ENCODE measurements at regions of chr15 and their contacts with region 1.

Region 1: GRCh38 chr15:82540055-82540983 is at the start of gene RPS17:
- DNase-seq: peak; percentile 97
- ATAC-seq: peak; percentile 95
- H3K4me3 ChIP-seq: peak within 1 kb of the TSS; percentile 66 to 93 (median 84)
- H3K4me3 Mint-ChIP-seq: peak within 1 kb of the TSS; percentile 99
- H3K27ac ChIP-seq: peak within 1 kb of the TSS; percentile 72 to 85
- H3K27ac Mint-ChIP-seq: peak within 1 kb of the TSS; percentile 98
- H3K4me1 ChIP-seq: peaks cover 10 to 23% of the 10 kb centered on the region in 2 donors
- H3K4me1 Mint-ChIP-seq: peaks cover 22% of the 10 kb centered on the region
- H3K27me3 ChIP-seq: peaks cover 0 to 8% (median 0%) of the 10 kb centered on the region in 4 experiments
- H3K27me3 Mint-ChIP-seq: peaks cover 4% of the 10 kb centered on the region
- CTCF ChIP-seq: peak; percentile 96
- total RNA-seq, gene RPS17: 2,214 and 2,297 TPM in 2 replicates

Region 2: DNA sequence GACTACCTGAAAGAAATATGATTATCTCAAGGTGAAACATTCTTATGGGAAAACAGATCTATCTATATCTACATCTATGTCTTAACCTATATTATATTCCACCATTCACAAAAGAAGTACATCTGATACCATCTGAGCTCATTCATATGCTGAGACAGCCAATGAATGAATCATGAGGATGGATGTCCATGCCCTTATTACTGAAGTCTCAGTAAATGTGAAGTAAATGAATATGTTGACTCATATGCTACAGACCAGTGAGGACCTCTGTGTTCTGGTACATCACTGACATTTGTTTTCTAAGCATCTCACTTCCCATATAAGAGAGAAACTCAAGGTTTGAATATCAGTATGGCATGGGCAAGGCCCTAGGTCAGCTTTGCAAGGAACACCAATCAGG is 855.1 kb before region 1 on chr15:
- CTCF ChIA-PET with region 1: no interaction called
- POLR2A ChIA-PET with region 1: no interaction called
- intact Hi-C with region 1: no loop called
- DNase-seq: no peak
- ATAC-seq: no peak
- H3K4me3 ChIP-seq: no peak overlapping the region
- H3K4me3 Mint-ChIP-seq: no peak overlapping the region
- H3K27ac ChIP-seq: no peak overlapping the region
- H3K27ac Mint-ChIP-seq: no peak overlapping the region
- H3K4me1 ChIP-seq: no peaks in the 10 kb centered on the region
- H3K4me1 Mint-ChIP-seq: no peaks in the 10 kb centered on the region
- H3K27me3 ChIP-seq: no peaks in the 10 kb centered on the region
- H3K27me3 Mint-ChIP-seq: no peaks in the 10 kb centered on the region
- CTCF ChIP-seq: no peak

Region 3: DNA sequence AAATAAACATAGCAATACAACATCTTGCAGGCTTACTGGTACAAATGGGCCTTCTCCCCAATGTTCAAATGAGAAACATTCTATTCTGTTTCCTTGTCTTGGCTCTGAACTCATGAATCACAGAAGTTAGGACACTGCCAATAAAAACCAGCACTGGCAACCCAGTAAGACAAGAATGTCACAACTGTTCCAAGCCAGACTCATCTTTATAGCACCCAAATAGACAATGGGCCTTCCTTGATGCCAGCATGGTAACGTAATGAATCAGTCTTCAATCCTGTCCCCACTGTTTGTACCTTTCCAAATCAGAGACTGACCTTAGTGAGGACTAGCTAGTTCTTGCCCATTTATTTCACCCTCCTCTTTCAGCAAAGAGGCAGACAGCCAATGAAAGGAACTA is 14.0 kb after region 1 on chr15:
- CTCF ChIA-PET with region 1: no interaction called
- POLR2A ChIA-PET with region 1: no interaction called
- intact Hi-C with region 1: no loop called
- DNase-seq: no peak
- ATAC-seq: no peak
- H3K4me3 ChIP-seq: no peak overlapping the region
- H3K4me3 Mint-ChIP-seq: no peak overlapping the region
- H3K27ac ChIP-seq: no peak overlapping the region
- H3K27ac Mint-ChIP-seq: no peak overlapping the region
- H3K4me1 ChIP-seq: no peaks in the 10 kb centered on the region
- H3K4me1 Mint-ChIP-seq: peaks cover 4% of the 10 kb centered on the region
- H3K27me3 ChIP-seq: peaks cover 0 to 10% (median 2%) of the 10 kb centered on the region in 4 experiments
- H3K27me3 Mint-ChIP-seq: peaks cover 14% of the 10 kb centered on the region
- CTCF ChIP-seq: no peak

Region 4: DNA sequence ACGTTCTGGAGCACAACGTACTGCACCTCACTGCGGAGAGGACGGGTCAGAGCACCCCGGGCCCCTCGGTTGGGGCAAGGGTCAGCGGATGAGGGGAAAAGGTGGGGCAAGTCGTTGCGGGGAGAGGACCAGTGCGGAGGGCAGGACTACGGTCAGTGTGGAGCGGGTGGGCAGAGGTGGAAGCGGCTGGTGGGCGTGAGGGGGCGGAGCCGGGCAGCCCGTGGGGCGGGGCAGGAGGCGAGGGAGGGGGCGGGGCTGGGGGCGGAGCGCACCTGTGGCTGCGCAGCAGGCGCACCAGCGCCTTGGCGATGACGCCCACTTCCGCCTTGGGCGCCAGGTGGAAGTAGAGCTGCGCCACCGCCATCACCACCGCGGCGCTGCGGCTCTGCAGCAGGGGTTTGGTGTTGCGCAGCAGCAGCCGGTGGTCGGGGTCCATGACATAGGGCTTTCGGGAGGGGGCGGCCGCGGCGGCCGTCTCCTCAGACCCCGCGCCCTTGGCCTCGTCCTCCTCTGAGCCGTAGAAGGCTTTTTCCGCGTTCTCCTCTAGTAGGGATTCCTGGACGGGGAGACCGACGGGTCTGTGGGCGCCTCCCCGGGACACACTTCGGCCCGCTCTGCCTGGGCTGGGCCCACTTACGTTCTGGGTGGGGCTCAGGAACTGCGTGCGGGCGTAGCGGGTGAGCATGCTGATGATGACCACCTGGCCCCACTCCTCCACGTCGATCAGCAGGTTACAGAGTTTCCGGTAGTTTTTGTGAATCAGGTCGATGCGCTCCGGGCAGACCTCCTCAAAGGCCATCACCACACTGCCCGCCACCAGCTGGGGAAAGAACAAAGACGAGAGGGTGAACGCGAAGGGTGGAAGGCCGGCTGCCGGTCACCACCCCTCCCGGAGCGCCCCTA is 140.1 kb after region 1 on chr15:
- CTCF ChIA-PET with region 1: interaction called, 3 read pairs
- POLR2A ChIA-PET with region 1: no interaction called
- intact Hi-C with region 1: loop called (anchors 1 kb)
- DNase-seq: peak; percentile 85
- ATAC-seq: peak; percentile 91
- H3K4me3 ChIP-seq: peak overlapping the region in 4 of 5 experiments; percentile 61 to 84 (median 72)
- H3K4me3 Mint-ChIP-seq: peak overlapping the region; percentile 92
- H3K27ac ChIP-seq: peak overlapping the region; percentile 46 to 65
- H3K27ac Mint-ChIP-seq: peak overlapping the region; percentile 87
- H3K4me1 ChIP-seq: peaks cover 14 to 15% of the 10 kb centered on the region in 2 donors
- H3K4me1 Mint-ChIP-seq: peaks cover 12% of the 10 kb centered on the region
- H3K27me3 ChIP-seq: peaks cover 0 to 21% (median 6%) of the 10 kb centered on the region in 4 experiments
- H3K27me3 Mint-ChIP-seq: peaks cover 6% of the 10 kb centered on the region
- CTCF ChIP-seq: peak; percentile 21

Region 5: DNA sequence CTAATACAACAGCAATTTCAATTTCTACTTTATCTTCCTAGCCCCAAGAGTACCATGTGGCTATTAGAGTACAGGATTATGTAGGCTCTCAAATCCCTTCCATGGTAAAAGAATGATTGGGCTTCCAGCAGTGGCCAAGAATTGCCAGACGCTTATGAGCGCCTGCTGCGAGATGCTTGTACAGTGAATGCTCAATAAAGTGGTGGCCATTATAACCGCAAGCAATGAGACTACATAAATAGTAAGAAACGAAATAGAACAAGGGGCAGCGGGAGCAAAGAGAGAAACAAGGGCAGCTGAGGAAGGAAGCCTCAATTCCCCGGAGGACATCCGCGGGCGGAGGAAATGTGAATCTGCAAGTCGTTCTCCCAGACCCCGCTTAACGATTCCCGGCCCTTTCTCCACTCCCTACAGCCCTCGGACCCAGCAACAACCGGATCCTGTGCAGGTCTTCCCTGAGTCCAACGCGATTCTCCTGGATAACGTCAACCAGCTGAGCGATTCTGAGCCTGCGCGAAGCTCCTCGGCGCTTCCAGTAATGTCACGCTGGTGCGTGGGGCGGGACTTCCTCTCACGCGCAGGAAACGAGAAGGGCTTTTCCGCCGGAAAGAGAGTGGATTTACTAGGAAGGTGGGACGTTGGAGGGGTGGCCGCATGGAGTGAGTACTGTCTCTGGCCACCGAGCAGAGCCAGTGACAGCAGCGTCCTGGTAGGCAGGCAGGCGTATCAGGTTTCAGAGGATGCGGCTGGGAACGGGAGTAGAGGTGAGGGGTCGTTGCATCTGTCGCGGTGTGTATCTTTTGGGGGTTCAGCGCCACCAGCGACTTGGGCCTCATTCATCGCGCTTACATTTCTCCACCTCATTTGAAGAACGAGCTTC is 209.9 kb after region 1 on chr15:
- CTCF ChIA-PET with region 1: no interaction called
- POLR2A ChIA-PET with region 1: interaction called, 5 read pairs
- intact Hi-C with region 1: loop called (anchors 1 kb)
- DNase-seq: peak; percentile 86
- ATAC-seq: peak; percentile 95
- H3K4me3 ChIP-seq: peak overlapping the region; percentile 75 to 97 (median 79)
- H3K4me3 Mint-ChIP-seq: peak overlapping the region; percentile 98
- H3K27ac ChIP-seq: peak overlapping the region; percentile 72 to 82
- H3K27ac Mint-ChIP-seq: peak overlapping the region; percentile 90
- H3K4me1 ChIP-seq: peaks cover 16 to 20% of the 10 kb centered on the region in 2 donors
- H3K4me1 Mint-ChIP-seq: peaks cover 41% of the 10 kb centered on the region
- H3K27me3 ChIP-seq: no peaks in the 10 kb centered on the region
- H3K27me3 Mint-ChIP-seq: no peaks in the 10 kb centered on the region
- CTCF ChIP-seq: no peak

Region 6: GRCh38 chr15:82985688-82986441 is 445.5 kb after region 1 on chr15 and contains the start of gene RAMAC:
- CTCF ChIA-PET with region 1: interaction called, 11 read pairs
- POLR2A ChIA-PET with region 1: interaction called, 13 read pairs
- intact Hi-C with region 1: loop called (anchors 1 kb)
- DNase-seq: peak; percentile 97
- ATAC-seq: peak; percentile 94
- H3K4me3 ChIP-seq: peak within 1 kb of the TSS; percentile 77 to 92 (median 82)
- H3K4me3 Mint-ChIP-seq: peak within 1 kb of the TSS; percentile 100
- H3K27ac ChIP-seq: peak within 1 kb of the TSS; percentile 65 to 83
- H3K27ac Mint-ChIP-seq: peak within 1 kb of the TSS; percentile 97
- H3K4me1 ChIP-seq: peaks cover 12 to 17% of the 10 kb centered on the region in 2 donors
- H3K4me1 Mint-ChIP-seq: peaks cover 24% of the 10 kb centered on the region
- H3K27me3 ChIP-seq: no peaks in the 10 kb centered on the region
- H3K27me3 Mint-ChIP-seq: no peaks in the 10 kb centered on the region
- CTCF ChIP-seq: no peak
- total RNA-seq, gene RAMAC: 20.2 and 20.8 TPM in 2 replicates

Region 7: GRCh38 chr15:83011271-83012075 is 471.2 kb after region 1 on chr15 and contains the start of gene C15orf40:
- CTCF ChIA-PET with region 1: interaction called, 5 read pairs
- POLR2A ChIA-PET with region 1: interaction called, 9 read pairs
- intact Hi-C with region 1: loop called (anchors 1 kb)
- DNase-seq: peak; percentile 94
- ATAC-seq: peak; percentile 91
- H3K4me3 ChIP-seq: peak within 1 kb of the TSS; percentile 90 to 99 (median 92)
- H3K4me3 Mint-ChIP-seq: peak within 1 kb of the TSS; percentile 96
- H3K27ac ChIP-seq: peak within 1 kb of the TSS; percentile 69 to 83
- H3K27ac Mint-ChIP-seq: peak within 1 kb of the TSS; percentile 92
- H3K4me1 ChIP-seq: peaks cover 22 to 24% of the 10 kb centered on the region in 2 donors
- H3K4me1 Mint-ChIP-seq: peaks cover 50% of the 10 kb centered on the region
- H3K27me3 ChIP-seq: no peaks in the 10 kb centered on the region
- H3K27me3 Mint-ChIP-seq: no peaks in the 10 kb centered on the region
- CTCF ChIP-seq: no peak
- total RNA-seq, gene C15orf40: 39.5 and 40.7 TPM in 2 replicates

Measured in B cell (primary cell).